ENCODE measurements at regions of chr7 and their contacts with region 1.

Region 1: GRCh38 chr7:86846494-86847190 is 202.9 kb downstream of the GRM3 start:
- DNase-seq: no peak
- ATAC-seq: no peak
- H3K4me3 Mint-ChIP-seq: no peak overlapping the region
- H3K27ac Mint-ChIP-seq: no peak overlapping the region
- H3K4me1 Mint-ChIP-seq: no peaks in the 10 kb centered on the region
- H3K27me3 Mint-ChIP-seq: peaks cover 1% of the 10 kb centered on the region

Region 2: GRCh38 chr7:87129848-87130247 is 283.2 kb after region 1 on chr7:
- CTCF ChIA-PET with region 1: no interaction called
- POLR2A ChIA-PET with region 1: no interaction called
- intact Hi-C with region 1: no loop called
- DNase-seq: no peak
- ATAC-seq: peak; percentile 33
- H3K4me3 Mint-ChIP-seq: no peak overlapping the region
- H3K27ac Mint-ChIP-seq: no peak overlapping the region
- H3K4me1 Mint-ChIP-seq: peaks cover 3% of the 10 kb centered on the region
- H3K27me3 Mint-ChIP-seq: peaks cover 10% of the 10 kb centered on the region

Region 3: DNA sequence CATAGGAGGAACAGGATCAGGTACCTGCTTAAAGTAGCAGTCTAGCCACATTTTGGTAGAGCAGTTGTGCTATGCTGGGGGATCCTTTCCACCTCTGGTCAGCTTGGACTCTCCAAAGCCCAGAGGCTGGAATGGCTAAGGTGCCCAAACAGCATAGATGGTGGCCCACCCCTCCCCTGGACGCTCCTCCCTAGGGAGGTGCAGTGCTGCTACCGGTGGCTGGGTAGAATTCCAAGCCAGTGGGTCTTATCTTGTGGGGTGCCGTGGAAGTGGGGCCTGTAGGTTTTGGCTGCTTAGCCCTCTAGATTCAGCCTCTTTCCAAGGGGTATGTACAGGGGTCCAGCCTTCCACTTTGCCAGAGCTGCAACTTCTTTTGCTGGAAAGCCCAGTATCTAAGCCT is 825.6 kb after region 1 on chr7:
- CTCF ChIA-PET with region 1: no interaction called
- POLR2A ChIA-PET with region 1: no interaction called
- intact Hi-C with region 1: loop called in 1 of 2 experiments (anchors 10 kb)
- DNase-seq: no peak
- ATAC-seq: no peak
- H3K4me3 Mint-ChIP-seq: no peak overlapping the region
- H3K27ac Mint-ChIP-seq: no peak overlapping the region
- H3K4me1 Mint-ChIP-seq: no peaks in the 10 kb centered on the region
- H3K27me3 Mint-ChIP-seq: peaks cover 4% of the 10 kb centered on the region

Measured in activated CD4-positive, alpha-beta T cell treated with anti-CD3 and anti-CD28 coated beads for 36 hours (primary cell).